ENCODE measurements at regions of chr20 and their contacts with region 1.

Region 1: GRCh38 chr20:2752567-2753460 is 47.6 kb downstream of the CPXM1 start:
- DNase-seq: peak in 2 of 5 donors; percentile 40 to 70
- ATAC-seq: no peak
- H3K4me3 ChIP-seq: peak overlapping the region; percentile 10 to 62 (median 46)
- H3K27ac ChIP-seq: no peak overlapping the region
- H3K4me1 ChIP-seq: peaks cover 0 to 30% (median 20%) of the 10 kb centered on the region in 12 donors
- H3K27me3 ChIP-seq: peaks cover 5 to 54% (median 46%) of the 10 kb centered on the region in 9 donors
- CTCF ChIP-seq: peak; percentile 33 to 72 (median 58)
- POLR2A ChIP-seq: no peak

Region 2: GRCh38 chr20:2273634-2274302 is 479.0 kb before region 1 on chr20:
- intact Hi-C with region 1: no loop called
- DNase-seq: no peak
- ATAC-seq: no peak
- H3K4me3 ChIP-seq: no peak overlapping the region
- H3K27ac ChIP-seq: no peak overlapping the region
- H3K4me1 ChIP-seq: no peaks in the 10 kb centered on the region
- H3K27me3 ChIP-seq: peaks cover 0 to 16% (median 0%) of the 10 kb centered on the region in 9 donors
- CTCF ChIP-seq: no peak
- POLR2A ChIP-seq: no peak

Region 3: DNA sequence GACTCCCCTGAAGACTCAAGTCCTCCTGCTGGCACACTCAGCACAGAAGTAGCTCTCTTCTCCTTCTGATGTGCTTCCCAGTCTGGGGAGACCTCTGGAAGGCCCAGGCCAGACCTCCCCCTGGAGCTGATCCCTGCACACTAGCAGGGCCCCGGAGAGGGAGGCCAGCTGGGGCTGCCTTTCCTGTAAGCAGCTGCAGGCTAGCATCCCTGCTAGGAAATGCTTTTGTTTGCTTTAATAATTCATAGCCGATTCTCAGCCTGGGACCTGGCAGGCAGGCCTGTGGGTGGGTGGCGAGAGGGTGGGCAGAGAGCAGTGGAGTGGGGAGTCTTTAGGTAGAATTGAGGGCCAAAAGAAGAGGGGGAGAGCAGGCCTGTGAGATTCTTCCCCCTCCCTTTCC is 55.0 kb before region 1 on chr20:
- intact Hi-C with region 1: loop called in 2 of 10 experiments (anchors 5 kb)
- DNase-seq: peak in 1 of 5 donors; percentile 5
- ATAC-seq: no peak
- H3K4me3 ChIP-seq: no peak overlapping the region
- H3K27ac ChIP-seq: no peak overlapping the region
- H3K4me1 ChIP-seq: peaks cover 0 to 12% (median 0%) of the 10 kb centered on the region in 12 donors
- H3K27me3 ChIP-seq: peaks cover 0 to 32% (median 4%) of the 10 kb centered on the region in 9 donors
- CTCF ChIP-seq: no peak
- POLR2A ChIP-seq: no peak

Region 4: DNA sequence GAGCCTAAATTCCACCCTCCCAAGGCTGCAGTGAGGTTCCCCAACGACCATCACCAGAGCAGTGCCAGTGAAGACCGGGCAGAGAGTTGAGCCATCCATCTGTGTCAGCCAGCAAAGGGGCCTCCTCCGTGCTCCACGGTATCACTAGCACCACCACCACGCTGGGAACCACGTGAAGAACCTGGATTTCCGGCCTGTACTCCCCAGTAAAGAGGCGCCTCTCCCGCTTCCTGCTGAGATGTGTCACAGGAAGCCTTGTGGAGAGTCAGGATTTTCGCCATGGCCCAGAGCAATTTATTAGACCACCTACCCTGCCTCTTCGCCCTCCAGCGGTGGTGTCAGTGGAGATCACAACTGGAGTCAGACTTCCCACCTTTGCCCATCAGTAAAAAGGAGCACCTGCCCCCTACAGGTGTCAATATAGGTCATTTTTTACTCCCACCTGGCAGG is 18.8 kb after region 1 on chr20:
- intact Hi-C with region 1: no loop called
- DNase-seq: no peak
- ATAC-seq: peak in 2 of 4 donors; percentile 27 to 36
- H3K4me3 ChIP-seq: no peak overlapping the region
- H3K27ac ChIP-seq: no peak overlapping the region
- H3K4me1 ChIP-seq: peaks cover 0 to 9% (median 2%) of the 10 kb centered on the region in 12 donors
- H3K27me3 ChIP-seq: peaks cover 0 to 28% (median 0%) of the 10 kb centered on the region in 9 donors
- CTCF ChIP-seq: no peak
- POLR2A ChIP-seq: no peak

Region 5: DNA sequence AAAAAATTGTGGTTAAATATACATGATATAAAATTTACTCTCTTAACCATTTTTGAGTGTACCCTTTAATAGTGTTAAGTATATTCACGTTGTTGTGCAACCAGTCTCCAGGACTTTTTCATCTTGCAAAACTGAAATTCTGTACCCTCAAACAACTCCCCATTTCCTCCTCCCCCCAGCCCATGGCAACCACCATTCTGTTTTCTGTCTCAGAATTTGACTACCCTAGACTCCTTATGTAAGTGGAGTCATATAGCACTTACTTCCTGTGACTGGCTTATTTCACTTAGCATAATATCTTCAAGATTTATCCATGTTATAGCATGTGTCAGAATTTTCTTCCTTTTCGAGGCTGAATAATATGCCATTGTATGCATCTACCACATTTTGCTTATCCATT is 92.8 kb after region 1 on chr20:
- intact Hi-C with region 1: loop called in 8 of 10 experiments (anchors 5 to 10 kb)
- DNase-seq: no peak
- ATAC-seq: no peak
- H3K4me3 ChIP-seq: no peak overlapping the region
- H3K27ac ChIP-seq: no peak overlapping the region
- H3K4me1 ChIP-seq: peaks cover 0 to 13% (median 7%) of the 10 kb centered on the region in 12 donors
- H3K27me3 ChIP-seq: no peaks in the 10 kb centered on the region
- CTCF ChIP-seq: no peak
- POLR2A ChIP-seq: no peak

Region 6: GRCh38 chr20:2859330-2860121 is 106.7 kb after region 1 on chr20:
- intact Hi-C with region 1: loop called in 5 of 10 experiments (anchors 5 to 10 kb)
- DNase-seq: peak in 1 of 5 donors; percentile 45
- ATAC-seq: peak in 3 of 4 donors; percentile 34 to 54 (median 52)
- H3K4me3 ChIP-seq: no peak overlapping the region
- H3K27ac ChIP-seq: no peak overlapping the region
- H3K4me1 ChIP-seq: peaks cover 0 to 14% (median 7%) of the 10 kb centered on the region in 12 donors
- H3K27me3 ChIP-seq: no peaks in the 10 kb centered on the region
- CTCF ChIP-seq: no peak
- POLR2A ChIP-seq: no peak

Region 7: GRCh38 chr20:2873010-2873746 is 120.4 kb after region 1 on chr20 and contains the start of gene PTPRA:
- intact Hi-C with region 1: no loop called
- DNase-seq: peak; percentile 94 to 96 (median 95)
- ATAC-seq: peak; percentile 97 to 98 (median 97)
- H3K4me3 ChIP-seq: peak within 1 kb of the TSS; percentile 62 to 100 (median 84)
- H3K27ac ChIP-seq: peak within 1 kb of the TSS; percentile 70 to 92 (median 80)
- H3K4me1 ChIP-seq: peaks cover 0 to 52% (median 31%) of the 10 kb centered on the region in 12 donors
- H3K27me3 ChIP-seq: no peaks in the 10 kb centered on the region
- CTCF ChIP-seq: peak in 1 of 12 donors; percentile 4
- POLR2A ChIP-seq: peak; percentile 15 to 95
- total RNA-seq, gene PTPRA: 17.3 to 43.4 (median 32.2) TPM

Region 8: DNA sequence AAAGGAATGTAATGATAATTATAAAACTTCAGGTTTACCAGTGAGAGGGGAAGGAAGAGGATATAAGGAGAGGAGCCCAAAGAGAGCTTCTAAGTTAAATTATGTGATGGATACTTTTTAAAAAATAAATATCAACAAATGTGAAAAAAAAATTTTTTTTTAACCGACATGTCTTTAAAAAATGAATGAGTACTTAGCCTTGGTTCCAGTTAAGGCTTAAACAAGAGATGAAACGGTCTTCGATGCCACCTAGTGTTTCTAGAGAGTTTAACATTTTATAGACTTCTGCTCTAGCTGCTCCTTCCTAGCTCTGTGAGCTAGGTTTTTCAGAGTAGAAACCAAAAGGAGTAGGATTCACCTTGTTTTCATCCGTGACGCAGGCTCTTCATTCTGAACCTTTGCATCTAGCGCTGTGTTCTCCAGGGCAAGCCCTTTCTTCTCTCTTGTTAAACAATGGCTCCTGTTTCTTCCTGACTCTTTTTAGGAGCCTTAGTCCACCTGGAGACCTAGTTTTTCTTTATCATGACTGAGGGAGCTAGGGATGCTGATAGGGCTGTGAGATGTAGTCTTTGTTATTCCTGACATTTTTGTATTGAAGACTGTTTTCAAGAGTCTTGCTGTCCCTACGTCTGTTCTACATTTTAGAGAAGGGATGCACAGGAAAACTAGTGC is 248.2 kb after region 1 on chr20:
- intact Hi-C with region 1: loop called in 5 of 10 experiments (anchors 5 to 10 kb)
- DNase-seq: no peak
- ATAC-seq: peak; percentile 49 to 72 (median 56)
- H3K4me3 ChIP-seq: no peak overlapping the region
- H3K27ac ChIP-seq: no peak overlapping the region
- H3K4me1 ChIP-seq: no peaks in the 10 kb centered on the region
- H3K27me3 ChIP-seq: no peaks in the 10 kb centered on the region
- CTCF ChIP-seq: peak in 10 of 12 donors; percentile 37 to 65 (median 48)
- POLR2A ChIP-seq: no peak

Region 9: GRCh38 chr20:3767427-3768341 is 1014.9 kb after region 1 on chr20 and contains the start of gene ADISSP:
- intact Hi-C with region 1: no loop called
- DNase-seq: peak; percentile 99 to 100 (median 99)
- ATAC-seq: peak; percentile 96 to 98 (median 96)
- H3K4me3 ChIP-seq: peak within 1 kb of the TSS; percentile 49 to 78 (median 69)
- H3K27ac ChIP-seq: peak within 1 kb of the TSS; percentile 54 to 96 (median 86)
- H3K4me1 ChIP-seq: peaks cover 0 to 47% (median 22%) of the 10 kb centered on the region in 12 donors
- H3K27me3 ChIP-seq: no peaks in the 10 kb centered on the region
- CTCF ChIP-seq: peak in 4 of 12 donors; percentile 21 to 44 (median 28)
- POLR2A ChIP-seq: peak in 1 of 2 donors; percentile 69
- total RNA-seq, gene ADISSP: 7.8 to 22.2 (median 13.7) TPM

Measured in heart left ventricle (tissue), 16 donors.